ENCODE measurements at regions of chr6 and their contacts with region 1.

Region 1: GRCh38 chr6:83057705-83058321 is 7.8 kb downstream of the UBE3D start:
- DNase-seq: no peak
- ATAC-seq: no peak
- H3K4me3 ChIP-seq: no peak overlapping the region
- H3K27ac ChIP-seq: no peak overlapping the region
- H3K4me1 ChIP-seq: no peaks in the 10 kb centered on the region
- H3K27me3 ChIP-seq: no peaks in the 10 kb centered on the region

Region 2: DNA sequence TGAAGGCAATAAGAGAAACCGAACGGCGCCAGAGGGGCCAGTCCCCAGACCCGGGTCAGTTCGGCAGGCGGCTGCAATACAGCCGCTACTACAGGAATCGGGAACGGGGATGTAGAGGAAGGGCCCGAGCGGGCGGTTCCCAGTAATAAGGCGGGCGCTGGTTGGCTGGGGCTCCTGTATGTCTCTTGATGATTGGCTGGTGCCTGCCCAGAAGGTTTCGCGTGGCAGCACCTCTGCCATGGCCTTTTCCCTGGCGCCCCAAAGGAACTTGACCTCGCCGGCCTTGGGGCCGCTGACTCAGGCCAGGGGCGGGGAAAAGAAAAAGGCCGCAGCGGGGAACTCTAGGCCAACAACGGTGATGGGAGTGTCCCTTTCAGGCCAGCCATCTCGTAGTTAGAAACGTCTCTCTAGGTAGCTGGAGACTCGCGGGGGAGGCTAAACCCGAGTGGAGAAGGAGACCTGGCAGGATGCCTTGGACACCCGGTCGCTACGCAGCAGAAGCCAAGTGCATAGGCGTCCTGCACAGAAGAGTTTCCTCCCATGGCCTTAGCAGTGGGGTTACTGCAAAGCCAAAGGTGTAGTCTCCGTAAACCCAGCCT is 810.1 kb before region 1 on chr6 and contains the start of gene IBTK:
- intact Hi-C with region 1: loop called (anchors 5 kb)
- DNase-seq: peak; percentile 96 to 98
- ATAC-seq: peak; percentile 99
- H3K4me3 ChIP-seq: peak within 1 kb of the TSS; percentile 48 to 88
- H3K27ac ChIP-seq: peak within 1 kb of the TSS; percentile 71 to 90
- H3K4me1 ChIP-seq: no peaks in the 10 kb centered on the region
- H3K27me3 ChIP-seq: no peaks in the 10 kb centered on the region
- total RNA-seq, gene IBTK: 33.5 to 34.0 TPM

Region 3: GRCh38 chr6:83019741-83020140 is 38.1 kb before region 1 on chr6:
- intact Hi-C with region 1: no loop called
- DNase-seq: no peak
- ATAC-seq: no peak
- H3K4me3 ChIP-seq: no peak overlapping the region
- H3K27ac ChIP-seq: no peak overlapping the region
- H3K4me1 ChIP-seq: no peaks in the 10 kb centered on the region
- H3K27me3 ChIP-seq: no peaks in the 10 kb centered on the region

Measured in aorta (tissue), 5 donors.